ENCODE measurements at regions of chr14 and their contacts with region 1.

Region 1: GRCh38 chr14:22929104-22929847 is at the start of gene PRMT5:
- DNase-seq: peak; percentile 95
- H3K4me3 Mint-ChIP-seq: no peak within 1 kb of the TSS
- H3K27ac Mint-ChIP-seq: no peak within 1 kb of the TSS
- H3K4me1 Mint-ChIP-seq: peaks cover 32% of the 10 kb centered on the region
- H3K27me3 Mint-ChIP-seq: no peaks in the 10 kb centered on the region
- total RNA-seq, gene PRMT5: 174 and 180 TPM in 2 replicates

Region 2: GRCh38 chr14:22886500-22887259 is 42.6 kb before region 1 on chr14:
- intact Hi-C with region 1: loop called (anchors 1 kb)
- DNase-seq: peak; percentile 62
- H3K4me3 Mint-ChIP-seq: peak overlapping the region; percentile 87
- H3K27ac Mint-ChIP-seq: peak overlapping the region; percentile 88
- H3K4me1 Mint-ChIP-seq: peaks cover 31% of the 10 kb centered on the region
- H3K27me3 Mint-ChIP-seq: peaks cover 8% of the 10 kb centered on the region

Region 3: GRCh38 chr14:22955702-22956569 is 26.7 kb after region 1 on chr14:
- intact Hi-C with region 1: loop called (anchors 1 kb)
- DNase-seq: no peak
- H3K4me3 Mint-ChIP-seq: peak overlapping the region; percentile 93
- H3K27ac Mint-ChIP-seq: peak overlapping the region; percentile 86
- H3K4me1 Mint-ChIP-seq: peaks cover 17% of the 10 kb centered on the region
- H3K27me3 Mint-ChIP-seq: peaks cover 3% of the 10 kb centered on the region

Region 4: DNA sequence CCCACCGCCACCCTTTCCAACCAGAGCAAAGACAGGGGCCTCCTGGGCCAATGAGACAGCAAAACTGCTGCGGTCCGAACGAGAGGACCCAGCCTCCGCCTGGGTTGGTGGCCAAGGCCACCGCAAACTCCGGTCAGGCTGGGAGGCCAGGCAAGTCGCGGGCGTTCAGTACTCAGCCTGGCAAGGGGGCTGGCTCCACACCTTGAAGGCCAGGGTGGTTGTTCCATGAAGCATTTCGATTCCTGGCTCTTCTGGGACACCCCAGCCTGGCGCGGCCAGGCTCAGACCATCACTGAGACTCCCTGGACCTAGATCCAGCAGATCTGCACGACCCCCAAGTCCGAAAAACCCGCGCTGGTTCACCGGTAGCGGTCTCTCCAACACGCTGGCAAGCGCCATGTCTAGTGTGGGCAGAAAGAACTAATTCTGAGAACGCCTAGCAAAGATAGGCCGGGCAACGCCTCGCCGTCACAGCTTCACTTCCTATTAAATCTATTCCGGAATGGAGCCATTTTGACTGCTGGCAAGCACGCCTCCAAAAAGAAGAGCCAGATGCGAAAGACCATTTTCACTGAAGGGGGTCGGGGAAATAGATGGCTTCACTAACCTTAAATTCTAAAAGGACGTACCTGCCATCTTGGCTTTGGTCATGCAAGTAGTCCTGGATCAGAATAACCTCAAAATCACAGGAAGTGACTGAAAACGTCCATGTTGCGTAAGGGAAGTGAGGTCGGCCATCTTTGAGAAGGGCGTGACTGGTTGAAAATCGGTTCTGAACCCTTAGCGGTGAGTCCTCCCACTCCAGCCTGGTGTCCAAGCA is 105.4 kb after region 1 on chr14 and contains the start of gene PSMB5:
- intact Hi-C with region 1: loop called (anchors 1 kb)
- DNase-seq: peak; percentile 85
- H3K4me3 Mint-ChIP-seq: peak within 1 kb of the TSS; percentile 98
- H3K27ac Mint-ChIP-seq: peak within 1 kb of the TSS; percentile 98
- H3K4me1 Mint-ChIP-seq: peaks cover 28% of the 10 kb centered on the region
- H3K27me3 Mint-ChIP-seq: peaks cover 2% of the 10 kb centered on the region
- total RNA-seq, gene PSMB5: 144 and 148 TPM in 2 replicates

Measured in activated T-helper 1 cell treated with anti-CD3 and anti-CD28 coated beads, Interleukin-12 subunit alpha, Interleukin-12 subunit beta, Interleukin-2, Interleukin-4 antibody, amounts not matched to agents 30 ng/mL and 10 ng/mL and 1 ng/mL, durations not matched to agents 14 hours and 24 hours and 36 hours (primary cell).